ENCODE measurements at regions of chr6 and their contacts with region 1.

Region 1: DNA sequence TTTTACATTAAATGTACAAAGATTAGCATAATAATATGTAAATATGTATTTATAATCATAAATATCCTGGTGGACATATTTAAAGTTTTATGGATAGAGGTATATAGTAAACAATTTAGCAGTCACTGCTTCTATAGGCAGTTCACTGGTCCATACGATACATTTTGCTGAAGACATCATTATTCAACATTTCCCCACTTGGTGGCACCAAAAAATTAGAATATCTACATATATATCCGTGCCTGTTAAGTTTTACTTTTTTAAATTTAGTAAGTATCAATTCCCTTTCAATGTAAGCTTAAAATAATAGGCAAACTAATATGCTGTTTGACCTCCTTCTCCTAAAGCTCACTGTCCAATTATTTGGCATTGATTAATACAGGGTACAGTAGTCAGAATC is 64.2 kb downstream of the LMBRD1 start:
- DNase-seq: peak in 2 of 5 donors; percentile 5 to 12
- H3K4me3 ChIP-seq: no peak overlapping the region
- H3K4me3 Mint-ChIP-seq: no peak overlapping the region
- H3K27ac ChIP-seq: no peak overlapping the region
- H3K27ac Mint-ChIP-seq: no peak overlapping the region
- H3K4me1 ChIP-seq: no peaks in the 10 kb centered on the region
- H3K4me1 Mint-ChIP-seq: peaks cover 0 to 11% (median 7%) of the 10 kb centered on the region in 4 donors
- H3K27me3 ChIP-seq: no peaks in the 10 kb centered on the region
- H3K27me3 Mint-ChIP-seq: no peaks in the 10 kb centered on the region

Region 2: GRCh38 chr6:68238097-68238601 is 1494.5 kb before region 1 on chr6:
- CTCF ChIA-PET with region 1: no interaction called
- POLR2A ChIA-PET with region 1: no interaction called
- intact Hi-C with region 1: no loop called
- DNase-seq: no peak
- H3K4me3 ChIP-seq: no peak overlapping the region
- H3K4me3 Mint-ChIP-seq: no peak overlapping the region
- H3K27ac ChIP-seq: no peak overlapping the region
- H3K27ac Mint-ChIP-seq: no peak overlapping the region
- H3K4me1 ChIP-seq: no peaks in the 10 kb centered on the region
- H3K4me1 Mint-ChIP-seq: no peaks in the 10 kb centered on the region
- H3K27me3 ChIP-seq: no peaks in the 10 kb centered on the region
- H3K27me3 Mint-ChIP-seq: no peaks in the 10 kb centered on the region

Region 3: GRCh38 chr6:68634726-68635411 is 1097.8 kb before region 1 on chr6 and contains the start of gene ADGRB3:
- CTCF ChIA-PET with region 1: no interaction called
- POLR2A ChIA-PET with region 1: no interaction called
- intact Hi-C with region 1: loop called (anchors 5 kb)
- DNase-seq: peak; percentile 13 to 41 (median 27)
- H3K4me3 ChIP-seq: peak within 1 kb of the TSS; percentile 24 to 31
- H3K4me3 Mint-ChIP-seq: peak within 1 kb of the TSS; percentile 81 to 92 (median 88)
- H3K27ac ChIP-seq: no peak within 1 kb of the TSS
- H3K27ac Mint-ChIP-seq: peak within 1 kb of the TSS in 3 of 7 donors; percentile 19 to 26 (median 25)
- H3K4me1 ChIP-seq: peaks cover 10% of the 10 kb centered on the region
- H3K4me1 Mint-ChIP-seq: peaks cover 8 to 26% (median 22%) of the 10 kb centered on the region in 4 donors
- H3K27me3 ChIP-seq: peaks cover 7% of the 10 kb centered on the region
- H3K27me3 Mint-ChIP-seq: peaks cover 32 to 34% of the 10 kb centered on the region in 2 donors
- total RNA-seq, gene ADGRB3: not detected

Region 4: DNA sequence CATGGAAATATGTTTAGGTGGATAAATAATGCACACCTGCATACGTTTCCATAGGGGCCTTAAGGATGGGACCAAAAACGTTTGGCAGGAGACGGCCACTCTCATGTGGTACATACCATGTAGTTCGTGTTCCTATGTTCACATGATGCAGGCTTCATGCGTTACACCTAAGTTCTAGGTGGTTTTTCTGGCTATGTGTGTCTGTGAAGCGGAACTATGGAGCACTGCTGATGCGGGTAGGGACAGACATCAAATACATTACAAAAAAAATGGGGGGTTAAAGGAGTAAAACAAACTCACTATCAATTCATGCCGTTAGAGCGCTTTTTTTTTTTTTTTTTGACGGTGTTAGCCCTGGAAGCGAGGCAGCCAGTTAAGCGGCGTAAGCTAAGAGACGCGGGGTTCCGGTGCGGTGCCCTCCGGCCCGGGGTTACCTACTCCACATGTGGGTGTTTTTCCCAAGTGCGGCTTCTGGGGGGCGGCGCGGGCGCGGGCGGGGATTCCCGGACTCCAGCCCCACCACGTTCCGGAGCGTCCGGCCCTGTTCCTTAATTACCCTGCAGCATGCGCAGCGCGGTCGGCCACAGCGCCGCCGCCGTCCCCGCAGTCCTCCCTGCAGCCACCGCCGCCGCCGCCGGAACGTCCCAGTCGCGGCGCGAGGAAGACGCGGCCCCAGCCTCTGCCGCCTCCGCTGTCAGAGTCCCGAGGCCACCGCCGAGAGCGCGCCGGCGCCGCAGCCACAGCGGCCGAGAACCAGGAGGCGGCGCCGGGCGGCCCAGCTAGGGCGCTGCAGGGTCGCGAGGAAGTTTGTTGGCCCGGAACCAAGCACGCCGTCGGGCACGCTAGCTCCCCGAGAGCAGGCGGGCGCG is 134.4 kb after region 1 on chr6:
- CTCF ChIA-PET with region 1: interaction called, 3 read pairs
- POLR2A ChIA-PET with region 1: no interaction called
- intact Hi-C with region 1: loop called (anchors 2 kb)
- DNase-seq: peak; percentile 54 to 62 (median 58)
- H3K4me3 ChIP-seq: peak overlapping the region; percentile 29 to 37
- H3K4me3 Mint-ChIP-seq: peak overlapping the region; percentile 83 to 97 (median 92)
- H3K27ac ChIP-seq: peak overlapping the region; percentile 24
- H3K27ac Mint-ChIP-seq: peak overlapping the region; percentile 43 to 90 (median 71)
- H3K4me1 ChIP-seq: peaks cover 14% of the 10 kb centered on the region
- H3K4me1 Mint-ChIP-seq: peaks cover 11 to 23% (median 18%) of the 10 kb centered on the region in 4 donors
- H3K27me3 ChIP-seq: peaks cover 9% of the 10 kb centered on the region
- H3K27me3 Mint-ChIP-seq: peaks cover 8 to 13% of the 10 kb centered on the region in 2 donors

Region 5: DNA sequence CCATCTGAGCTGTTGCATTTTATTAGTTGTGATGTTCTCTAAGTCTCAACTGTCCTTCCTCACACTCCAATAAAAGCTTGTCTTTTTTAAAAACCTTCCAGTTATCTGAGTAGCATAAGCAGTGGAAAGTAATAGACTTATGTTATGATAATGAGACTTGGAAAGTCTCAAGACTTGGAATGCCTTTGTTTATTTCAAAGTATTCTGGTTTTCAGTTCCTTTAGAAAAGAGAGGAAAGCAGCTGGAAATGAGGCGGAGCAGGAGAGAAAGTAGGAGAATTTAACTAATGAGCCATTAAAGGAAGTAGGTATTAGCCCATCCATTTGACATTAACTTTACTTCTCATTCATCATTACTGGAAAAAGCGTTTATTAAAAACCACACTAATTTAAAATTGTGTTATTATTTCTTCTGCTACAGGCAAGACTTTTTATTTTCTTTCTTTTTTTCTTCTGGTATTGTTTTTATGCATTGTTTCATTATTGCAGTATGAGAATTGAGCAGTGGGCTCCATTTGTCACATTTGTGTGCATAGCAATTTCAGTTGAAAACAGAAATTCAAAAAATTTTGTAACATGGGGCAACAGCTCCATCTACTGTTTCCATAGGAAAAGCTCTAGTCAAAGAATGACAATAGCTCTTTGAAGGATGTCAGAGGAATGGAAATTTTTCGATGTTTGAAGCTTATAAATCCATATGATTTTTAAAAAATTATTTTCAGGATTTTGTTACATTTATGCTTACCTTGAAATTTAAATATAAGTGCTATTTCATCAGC is 375.4 kb after region 1 on chr6:
- CTCF ChIA-PET with region 1: interaction called, 5 read pairs
- POLR2A ChIA-PET with region 1: no interaction called
- intact Hi-C with region 1: loop called (anchors 1 kb)
- DNase-seq: peak in 4 of 5 donors; percentile 23 to 34 (median 28)
- H3K4me3 ChIP-seq: no peak overlapping the region
- H3K4me3 Mint-ChIP-seq: no peak overlapping the region
- H3K27ac ChIP-seq: no peak overlapping the region
- H3K27ac Mint-ChIP-seq: no peak overlapping the region
- H3K4me1 ChIP-seq: no peaks in the 10 kb centered on the region
- H3K4me1 Mint-ChIP-seq: no peaks in the 10 kb centered on the region
- H3K27me3 ChIP-seq: no peaks in the 10 kb centered on the region
- H3K27me3 Mint-ChIP-seq: peaks cover 5 to 6% of the 10 kb centered on the region in 2 donors

Region 6: DNA sequence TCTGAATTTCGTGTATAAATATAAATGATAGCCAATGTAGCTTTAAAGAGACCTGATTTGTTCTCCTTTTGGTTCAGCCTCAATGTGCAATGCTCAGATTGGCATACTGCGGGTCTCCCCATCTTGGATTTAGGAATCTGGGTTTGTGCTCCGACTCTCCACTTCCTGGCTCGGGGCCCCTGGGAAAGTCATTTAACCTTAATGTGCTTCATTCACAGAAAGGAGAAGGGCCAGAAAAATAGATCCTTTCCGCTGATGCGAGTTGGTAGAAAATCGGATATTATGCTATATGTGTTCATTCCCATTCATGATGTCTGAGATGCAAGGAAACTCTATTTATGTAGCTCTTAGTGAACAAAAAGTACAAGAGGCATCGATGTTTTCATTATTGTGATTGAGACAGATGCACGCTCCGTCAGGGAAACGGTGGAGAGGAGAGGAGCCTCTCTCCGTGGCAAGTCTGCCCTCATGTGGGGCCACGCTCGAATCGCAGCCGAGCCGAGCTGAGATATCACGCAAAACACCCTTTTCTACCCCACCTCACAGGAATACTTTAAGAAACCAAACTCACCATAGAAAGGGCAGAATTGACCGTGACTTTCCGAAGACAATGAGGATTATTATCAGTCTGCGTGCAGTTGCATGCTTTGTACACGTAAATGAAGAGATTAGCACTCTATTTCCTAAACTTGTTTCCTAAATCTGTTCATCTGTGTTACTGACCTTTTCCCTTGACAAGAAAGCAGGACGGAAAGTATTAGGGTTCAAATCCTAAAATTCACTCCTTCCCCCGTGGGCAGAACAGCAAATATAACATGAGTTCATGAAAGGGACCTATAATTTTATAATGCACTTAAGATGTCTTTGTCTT is 433.7 kb after region 1 on chr6:
- CTCF ChIA-PET with region 1: no interaction called
- POLR2A ChIA-PET with region 1: no interaction called
- intact Hi-C with region 1: loop called (anchors 2 kb)
- DNase-seq: peak in 3 of 5 donors; percentile 1 to 3 (median 2)
- H3K4me3 ChIP-seq: no peak overlapping the region
- H3K4me3 Mint-ChIP-seq: no peak overlapping the region
- H3K27ac ChIP-seq: no peak overlapping the region
- H3K27ac Mint-ChIP-seq: no peak overlapping the region
- H3K4me1 ChIP-seq: no peaks in the 10 kb centered on the region
- H3K4me1 Mint-ChIP-seq: peaks cover 0 to 6% (median 3%) of the 10 kb centered on the region in 4 donors
- H3K27me3 ChIP-seq: peaks cover 4% of the 10 kb centered on the region
- H3K27me3 Mint-ChIP-seq: peaks cover 16 to 23% of the 10 kb centered on the region in 2 donors

Measured in CD4-positive, alpha-beta memory T cell (primary cell).